ENCODE measurements at regions of chr20 and their contacts with region 1.

Region 1: GRCh38 chr20:3811467-3812258 is 8.7 kb upstream of the AP5S1 start:
- DNase-seq: peak; percentile 81
- ATAC-seq: peak; percentile 77
- H3K4me3 Mint-ChIP-seq: peak overlapping the region; percentile 75
- H3K27ac Mint-ChIP-seq: peak overlapping the region; percentile 94
- H3K4me1 Mint-ChIP-seq: peaks cover 58% of the 10 kb centered on the region
- H3K27me3 Mint-ChIP-seq: no peaks in the 10 kb centered on the region

Region 2: GRCh38 chr20:3686867-3687321 is 124.8 kb before region 1 on chr20:
- POLR2A ChIA-PET with region 1: no interaction called
- DNase-seq: no peak
- ATAC-seq: no peak
- H3K4me3 Mint-ChIP-seq: no peak overlapping the region
- H3K27ac Mint-ChIP-seq: no peak overlapping the region
- H3K4me1 Mint-ChIP-seq: no peaks in the 10 kb centered on the region
- H3K27me3 Mint-ChIP-seq: peaks cover 39% of the 10 kb centered on the region

Region 3: DNA sequence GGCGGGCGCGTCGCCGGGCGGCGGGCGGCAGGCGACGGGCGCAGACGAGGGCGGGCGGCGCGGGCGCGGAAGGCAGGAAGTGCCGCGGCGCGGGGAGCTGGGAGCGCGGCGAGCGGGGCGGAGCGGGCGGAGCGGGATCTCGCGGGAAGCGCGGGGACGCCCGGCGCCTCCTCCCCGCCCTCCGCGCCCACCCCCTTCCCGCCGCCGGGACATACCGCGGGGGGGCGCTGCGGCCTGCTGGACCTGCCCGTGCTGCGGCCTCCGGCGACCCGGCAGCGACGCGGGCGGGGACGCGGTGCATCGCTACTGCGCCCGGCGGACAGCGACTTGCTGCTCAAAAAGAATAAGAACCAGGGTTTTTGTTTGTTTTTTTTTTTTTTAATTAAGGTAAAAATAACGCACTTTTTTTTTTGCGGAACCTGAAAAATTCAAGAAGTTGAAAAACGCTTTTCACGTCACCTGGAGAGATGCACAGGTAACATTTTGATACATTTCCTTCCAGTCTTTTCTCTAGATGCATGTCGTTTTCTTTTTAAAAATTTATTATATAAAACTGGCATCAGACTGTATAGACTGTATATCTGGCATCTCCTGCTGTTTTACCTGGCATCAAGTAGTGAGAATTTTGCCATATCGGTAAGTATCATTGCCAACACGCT is 24.9 kb before region 1 on chr20 and contains the start of gene CENPB:
- POLR2A ChIA-PET with region 1: interaction called, 14 read pairs
- DNase-seq: peak; percentile 99
- ATAC-seq: peak; percentile 94
- H3K4me3 Mint-ChIP-seq: peak within 1 kb of the TSS; percentile 78
- H3K27ac Mint-ChIP-seq: peak within 1 kb of the TSS; percentile 65
- H3K4me1 Mint-ChIP-seq: peaks cover 26% of the 10 kb centered on the region
- H3K27me3 Mint-ChIP-seq: peaks cover 7% of the 10 kb centered on the region
- total RNA-seq, gene CENPB: 63.3 to 65.7 TPM

Region 4: GRCh38 chr20:3795511-3796468 is 15.9 kb before region 1 on chr20 and contains the start of gene CDC25B:
- POLR2A ChIA-PET with region 1: interaction called, 59 read pairs
- DNase-seq: peak; percentile 87
- ATAC-seq: peak; percentile 68
- H3K4me3 Mint-ChIP-seq: peak within 1 kb of the TSS; percentile 90
- H3K27ac Mint-ChIP-seq: peak within 1 kb of the TSS; percentile 92
- H3K4me1 Mint-ChIP-seq: peaks cover 34% of the 10 kb centered on the region
- H3K27me3 Mint-ChIP-seq: no peaks in the 10 kb centered on the region
- total RNA-seq, gene CDC25B: 263 to 264 TPM

Region 5: GRCh38 chr20:3970016-3970415 is 158.4 kb after region 1 on chr20:
- POLR2A ChIA-PET with region 1: no interaction called
- DNase-seq: no peak
- ATAC-seq: no peak
- H3K4me3 Mint-ChIP-seq: no peak overlapping the region
- H3K27ac Mint-ChIP-seq: no peak overlapping the region
- H3K4me1 Mint-ChIP-seq: peaks cover 3% of the 10 kb centered on the region
- H3K27me3 Mint-ChIP-seq: no peaks in the 10 kb centered on the region